Calu3 (cell line): ENCODE measurements at regions of chr4 and their contacts with region 1.

Region 1: GRCh38 chr4:123588631-123589241 is 192.1 kb downstream of the SPRY1 start:
- DNase-seq: peak; percentile 47
- H3K4me3 Mint-ChIP-seq: peak overlapping the region; percentile 57
- H3K27ac Mint-ChIP-seq: peak overlapping the region; percentile 98
- H3K4me1 Mint-ChIP-seq: peaks cover 33% of the 10 kb centered on the region
- H3K27me3 Mint-ChIP-seq: no peaks in the 10 kb centered on the region
- CTCF ChIP-seq: no peak

Region 2: GRCh38 chr4:123555233-123555806 is 33.4 kb before region 1 on chr4:
- CTCF ChIA-PET with region 1: interaction called, 6 read pairs
- intact Hi-C with region 1: loop called (anchors 1 kb)
- DNase-seq: peak; percentile 88
- H3K4me3 Mint-ChIP-seq: peak overlapping the region; percentile 55
- H3K27ac Mint-ChIP-seq: peak overlapping the region; percentile 90
- H3K4me1 Mint-ChIP-seq: peaks cover 67% of the 10 kb centered on the region
- H3K27me3 Mint-ChIP-seq: no peaks in the 10 kb centered on the region
- CTCF ChIP-seq: no peak

Region 3: GRCh38 chr4:123599920-123600810 is 11.4 kb after region 1 on chr4:
- CTCF ChIA-PET with region 1: interaction called, 7 read pairs
- intact Hi-C with region 1: loop called (anchors 1 kb)
- DNase-seq: peak; percentile 80
- H3K4me3 Mint-ChIP-seq: no peak overlapping the region
- H3K27ac Mint-ChIP-seq: peak overlapping the region; percentile 81
- H3K4me1 Mint-ChIP-seq: peaks cover 50% of the 10 kb centered on the region
- H3K27me3 Mint-ChIP-seq: no peaks in the 10 kb centered on the region
- CTCF ChIP-seq: no peak